ENCODE measurements at regions of chr19 and their contacts with region 1.

Region 1: DNA sequence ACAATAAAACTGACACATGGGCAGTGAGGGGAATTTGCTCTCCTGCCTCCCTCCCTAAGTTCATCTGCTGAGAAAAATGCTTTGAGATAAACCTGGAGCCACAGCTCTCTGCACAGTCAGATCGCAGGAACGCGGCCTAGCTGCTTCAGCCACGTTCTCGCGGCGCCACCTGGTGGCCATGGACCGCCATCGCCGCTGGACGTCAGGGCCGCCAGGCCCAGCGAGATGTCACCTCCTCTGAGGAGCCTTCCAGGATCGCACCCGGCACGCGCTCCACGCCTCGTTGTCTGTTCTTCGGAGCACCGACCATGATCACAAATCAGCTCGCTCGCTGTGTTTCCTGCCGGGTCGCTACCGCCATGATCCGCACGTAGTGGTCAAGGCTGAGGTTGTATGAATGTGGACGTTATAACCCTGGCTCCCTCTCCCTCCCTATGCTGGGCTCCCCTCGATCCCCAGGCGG is 20.6 kb upstream of the USP29 start:
- DNase-seq: peak; percentile 68 to 97 (median 80)

Region 2: GRCh38 chr19:56692206-56692895 is 406.9 kb before region 1 on chr19:
- intact Hi-C with region 1: loop called (anchors 10 kb)
- DNase-seq: peak in 8 of 10 donors; percentile 41 to 94 (median 67)

Region 3: DNA sequence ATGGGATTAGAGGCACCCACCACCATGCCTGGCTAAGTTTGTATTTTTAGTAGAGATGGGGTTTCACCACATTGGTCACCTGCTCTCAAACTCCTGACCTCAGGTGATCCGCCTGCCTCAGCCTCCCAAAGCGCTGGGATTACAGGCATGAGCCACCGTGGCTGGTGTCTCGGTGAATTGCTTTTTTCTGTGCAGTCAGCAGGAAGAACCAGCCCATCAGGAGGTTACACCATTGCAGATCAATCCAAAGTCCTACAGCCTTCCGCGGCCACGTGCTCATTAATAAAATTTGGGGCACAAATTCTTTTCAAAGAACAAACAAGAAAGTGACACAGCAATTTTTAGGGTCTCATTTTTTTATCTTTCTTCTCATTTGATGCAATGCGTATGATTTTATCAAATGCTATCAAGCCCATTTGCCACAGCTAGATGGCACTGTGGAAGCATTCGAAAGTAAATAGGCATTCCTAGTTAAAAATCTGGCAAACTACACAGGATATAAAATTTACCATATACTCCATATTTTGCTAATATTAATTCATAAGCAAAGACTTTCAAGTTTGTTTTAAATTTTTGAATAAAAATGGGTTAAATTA is 373.3 kb before region 1 on chr19:
- intact Hi-C with region 1: loop called (anchors 2 kb)
- DNase-seq: peak in 2 of 10 donors; percentile 44 to 50

Region 4: DNA sequence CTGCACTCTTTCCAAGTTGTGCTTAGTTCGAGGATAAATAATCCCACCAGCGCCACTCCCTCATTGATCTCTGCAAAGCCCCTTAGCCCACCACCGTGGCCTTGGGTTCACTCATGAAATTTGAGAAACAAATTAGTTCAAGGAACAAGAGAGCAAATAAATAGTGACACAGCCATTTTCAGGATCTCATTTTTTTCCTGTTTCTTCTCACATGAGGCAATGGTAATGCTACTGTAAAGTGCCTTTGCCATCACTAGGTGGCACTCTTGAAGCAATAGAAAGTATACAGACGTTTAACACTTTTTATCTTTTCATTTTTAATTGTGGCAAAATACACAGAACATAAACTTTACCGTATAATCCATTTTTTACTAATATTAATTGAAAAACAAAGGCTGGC is 350.9 kb before region 1 on chr19:
- intact Hi-C with region 1: loop called (anchors 2 kb)
- DNase-seq: peak in 1 of 10 donors; percentile 27

Region 5: GRCh38 chr19:56821209-56821608 is 278.0 kb before region 1 on chr19:
- intact Hi-C with region 1: no loop called
- DNase-seq: no peak

Measured in posterior cingulate gyrus (tissue), 11 donors.